ENCODE measurements at regions of chr7 and their contacts with region 1.

Region 1: GRCh38 chr7:99408379-99409191 is at the starts of genes BUD31 and PDAP1:
- DNase-seq: peak; percentile 74 to 94
- H3K4me3 ChIP-seq: peak within 1 kb of the TSS; percentile 85 to 97
- H3K27ac ChIP-seq: peak within 1 kb of the TSS; percentile 98 to 99
- H3K4me1 ChIP-seq: peaks cover 13 to 16% of the 10 kb centered on the region in 2 donors
- H3K27me3 ChIP-seq: no peaks in the 10 kb centered on the region
- CTCF ChIP-seq: peak in 1 of 3 experiments; percentile 27
- total RNA-seq, gene BUD31: 41.3 TPM
- total RNA-seq, gene PDAP1: 104 TPM

Region 2: DNA sequence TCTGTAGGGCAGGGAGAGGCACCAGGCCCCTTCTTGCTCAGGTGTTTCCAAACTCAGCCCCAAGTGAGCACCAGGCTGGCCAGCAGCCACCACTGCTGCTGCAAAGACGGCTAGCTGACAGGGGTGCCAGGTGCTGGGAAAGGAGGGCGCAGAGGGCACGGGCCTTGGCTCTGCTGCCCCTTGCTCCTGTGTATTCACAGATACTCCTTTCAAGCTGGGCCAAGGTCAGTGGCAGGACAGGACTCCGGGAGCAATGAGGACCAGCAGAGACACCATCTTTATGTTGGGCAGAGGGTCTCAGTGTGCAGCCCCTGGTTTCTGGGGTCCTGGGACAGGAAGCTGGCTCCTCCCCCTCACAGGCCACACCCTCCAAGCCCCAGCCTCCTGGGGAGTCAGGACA is 374.8 kb before region 1 on chr7:
- intact Hi-C with region 1: loop called (anchors 1 kb)
- DNase-seq: peak in 1 of 2 donors; percentile 57
- H3K4me3 ChIP-seq: no peak overlapping the region
- H3K27ac ChIP-seq: peak overlapping the region; percentile 88 to 91
- H3K4me1 ChIP-seq: peaks cover 9 to 35% of the 10 kb centered on the region in 2 donors
- H3K27me3 ChIP-seq: no peaks in the 10 kb centered on the region
- CTCF ChIP-seq: no peak

Region 3: GRCh38 chr7:99244939-99245338 is 163.6 kb before region 1 on chr7:
- intact Hi-C with region 1: no loop called
- DNase-seq: no peak
- H3K4me3 ChIP-seq: no peak overlapping the region
- H3K27ac ChIP-seq: no peak overlapping the region
- H3K4me1 ChIP-seq: no peaks in the 10 kb centered on the region
- H3K27me3 ChIP-seq: no peaks in the 10 kb centered on the region
- CTCF ChIP-seq: no peak

Region 4: DNA sequence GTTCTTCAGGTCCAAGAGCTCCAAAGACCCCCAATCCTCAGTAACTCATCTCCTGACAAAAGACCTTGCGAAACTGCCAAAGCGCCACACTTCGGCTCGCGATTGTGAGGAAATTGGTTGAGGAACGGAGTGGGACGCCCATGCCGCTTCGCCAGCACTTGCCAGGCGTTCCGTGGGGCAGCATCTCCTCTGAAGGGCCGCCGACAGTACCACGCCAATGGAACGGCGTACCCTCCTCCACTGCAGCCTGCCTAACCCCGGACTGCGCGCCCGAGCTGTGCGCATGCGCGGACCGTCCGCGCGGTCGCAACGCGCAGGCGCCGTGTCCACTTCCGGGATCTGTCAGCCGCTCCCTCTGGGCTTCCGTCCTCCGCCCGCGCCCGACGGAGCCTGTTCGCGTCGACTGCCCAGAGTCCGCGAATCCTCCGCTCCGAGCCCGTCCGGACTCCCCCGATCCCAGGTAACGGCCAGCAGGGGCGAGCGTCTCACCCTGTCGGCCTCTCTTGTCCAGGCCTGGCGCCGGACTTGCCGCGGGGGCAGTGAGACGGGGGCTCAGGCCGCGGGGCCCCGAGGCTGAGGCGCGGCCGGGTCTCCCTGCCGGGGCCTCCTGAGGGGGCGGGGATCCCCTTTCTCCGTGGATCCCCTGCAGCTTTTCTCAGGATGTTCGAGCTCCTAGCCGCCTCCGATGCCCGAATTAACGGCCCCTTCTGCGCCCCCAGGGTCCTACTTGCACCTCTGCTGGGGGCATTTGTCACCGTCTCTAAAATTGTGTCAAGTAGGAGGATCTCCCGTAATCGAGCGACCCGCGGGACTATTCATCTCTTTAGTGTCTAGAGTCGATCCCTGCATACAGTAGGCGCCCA is 82.8 kb before region 1 on chr7 and contains the start of gene ARPC1A:
- intact Hi-C with region 1: loop called (anchors 5 kb)
- DNase-seq: peak; percentile 49 to 94
- H3K4me3 ChIP-seq: peak within 1 kb of the TSS; percentile 78 to 82
- H3K27ac ChIP-seq: peak within 1 kb of the TSS; percentile 84 to 85
- H3K4me1 ChIP-seq: peaks cover 11 to 41% of the 10 kb centered on the region in 2 donors
- H3K27me3 ChIP-seq: no peaks in the 10 kb centered on the region
- CTCF ChIP-seq: peak; percentile 10 to 48 (median 27)
- total RNA-seq, gene ARPC1A: 87.7 TPM

Region 5: GRCh38 chr7:99353871-99354270 is 54.7 kb before region 1 on chr7:
- intact Hi-C with region 1: no loop called
- DNase-seq: no peak
- H3K4me3 ChIP-seq: no peak overlapping the region
- H3K27ac ChIP-seq: no peak overlapping the region
- H3K4me1 ChIP-seq: no peaks in the 10 kb centered on the region
- H3K27me3 ChIP-seq: no peaks in the 10 kb centered on the region
- CTCF ChIP-seq: no peak

Region 6: GRCh38 chr7:99374103-99375064 is 34.2 kb before region 1 on chr7 and contains the start of gene ARPC1B:
- intact Hi-C with region 1: loop called (anchors 1 kb)
- DNase-seq: peak; percentile 47 to 92
- H3K4me3 ChIP-seq: peak within 1 kb of the TSS; percentile 88 to 94
- H3K27ac ChIP-seq: peak within 1 kb of the TSS; percentile 87 to 97
- H3K4me1 ChIP-seq: peaks cover under 1 to 17% of the 10 kb centered on the region in 2 donors
- H3K27me3 ChIP-seq: no peaks in the 10 kb centered on the region
- CTCF ChIP-seq: no peak
- total RNA-seq, gene ARPC1B: 360 TPM

Region 7: GRCh38 chr7:99392677-99393354 is 15.8 kb before region 1 on chr7:
- intact Hi-C with region 1: loop called (anchors 1 kb)
- DNase-seq: peak in 1 of 2 donors; percentile 89
- H3K4me3 ChIP-seq: peak overlapping the region; percentile 62 to 80
- H3K27ac ChIP-seq: peak overlapping the region; percentile 73 to 83
- H3K4me1 ChIP-seq: peaks cover 8 to 11% of the 10 kb centered on the region in 2 donors
- H3K27me3 ChIP-seq: no peaks in the 10 kb centered on the region
- CTCF ChIP-seq: no peak

Region 8: GRCh38 chr7:99438573-99439480 is 30.2 kb after region 1 on chr7 and contains the starts of genes CPSF4 and PTCD1:
- intact Hi-C with region 1: loop called (anchors 2 kb)
- DNase-seq: peak; percentile 79 to 97
- H3K4me3 ChIP-seq: peak within 1 kb of the TSS; percentile 80 to 91
- H3K27ac ChIP-seq: peak within 1 kb of the TSS; percentile 85 to 87
- H3K4me1 ChIP-seq: peaks cover 5 to 22% of the 10 kb centered on the region in 2 donors
- H3K27me3 ChIP-seq: no peaks in the 10 kb centered on the region
- CTCF ChIP-seq: no peak
- total RNA-seq, gene CPSF4: 38.0 TPM
- total RNA-seq, gene PTCD1: 2.6 TPM

Region 9: DNA sequence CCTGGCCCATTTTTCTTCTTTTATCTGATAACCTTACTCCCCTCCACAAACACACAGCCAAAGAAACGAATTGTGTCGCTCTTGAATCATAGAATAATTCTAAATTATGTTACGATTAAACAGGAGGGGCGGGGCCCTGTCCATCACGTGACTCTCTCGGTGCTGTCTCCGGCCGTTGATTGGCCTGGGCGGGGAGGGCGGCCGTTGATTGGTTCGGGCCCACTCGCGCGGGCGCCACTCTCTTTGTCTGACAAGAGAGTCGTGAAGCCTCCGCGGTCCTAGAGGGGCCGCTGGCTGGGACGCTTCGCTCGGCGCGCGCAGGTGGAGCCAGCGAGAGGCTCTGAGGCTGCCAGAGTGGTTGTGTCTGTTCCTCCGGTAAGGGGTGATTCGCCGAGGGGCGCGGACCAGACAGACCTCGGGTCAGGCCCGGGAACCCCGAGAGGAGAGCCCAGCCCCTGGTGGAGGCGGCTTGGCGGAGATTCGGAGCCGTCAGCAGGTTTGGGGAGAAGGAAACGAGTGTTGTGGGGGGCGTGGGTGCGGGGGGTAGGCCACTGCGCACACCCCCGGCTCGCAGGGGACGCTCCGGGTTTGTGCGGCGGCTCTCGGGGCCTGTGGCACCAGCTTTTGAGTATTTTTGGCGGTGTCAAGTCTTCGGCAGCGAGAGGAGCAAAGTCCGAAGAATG is 64.1 kb after region 1 on chr7 and contains the start of gene ZNF789:
- intact Hi-C with region 1: loop called (anchors 2 kb)
- DNase-seq: peak; percentile 94 to 99
- H3K4me3 ChIP-seq: peak within 1 kb of the TSS; percentile 61 to 95
- H3K27ac ChIP-seq: peak within 1 kb of the TSS; percentile 83 to 86
- H3K4me1 ChIP-seq: peaks cover 0 to 14% of the 10 kb centered on the region in 2 donors
- H3K27me3 ChIP-seq: no peaks in the 10 kb centered on the region
- CTCF ChIP-seq: no peak
- total RNA-seq, gene ZNF789: 4.2 TPM

Measured in ascending aorta (tissue), 2 donors.